PC-9 (cell line): ENCODE measurements at regions of chr2 and their contacts with region 1.

Region 1: DNA sequence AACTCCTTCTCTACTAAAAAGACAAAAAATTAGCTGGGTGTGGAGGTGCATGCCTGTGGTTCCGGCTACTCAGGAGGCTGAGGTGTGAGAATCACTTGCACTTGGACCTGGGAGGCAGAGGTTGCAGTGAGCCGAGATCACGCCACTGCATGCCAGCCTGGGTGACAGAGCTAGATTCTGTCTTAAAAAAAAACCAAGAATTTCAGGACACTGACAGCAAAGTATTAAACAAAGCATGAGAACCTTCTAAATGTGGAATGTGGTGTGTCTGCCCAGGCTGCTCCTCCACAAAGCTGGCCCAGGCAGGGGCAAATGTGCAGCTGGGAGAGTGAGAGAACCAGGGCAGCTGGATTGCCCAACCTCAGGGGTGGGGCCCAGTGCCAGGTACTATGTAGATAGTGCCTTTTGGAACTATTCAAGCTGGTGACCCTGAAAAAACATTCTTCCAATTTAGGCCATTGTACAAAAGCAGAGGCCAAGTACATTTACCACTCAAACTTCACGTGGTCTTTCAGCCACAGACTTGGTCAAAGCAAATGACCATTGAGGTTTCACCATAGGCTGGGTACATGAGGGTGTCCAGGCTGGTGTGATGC is 6.7 kb upstream of the UGT1A5 start:
- DNase-seq: peak; percentile 97
- H3K4me3 ChIP-seq: peak overlapping the region; percentile 15; the same call in 1 of the 2 replicates
- H3K27ac ChIP-seq: peak overlapping the region; percentile 95
- H3K4me1 ChIP-seq: peaks cover 97% of the 10 kb centered on the region
- H3K27me3 ChIP-seq: no peaks in the 10 kb centered on the region
- CTCF ChIP-seq: no peak

Region 2: GRCh38 chr2:233413559-233414272 is 292.3 kb before region 1 on chr2:
- CTCF ChIA-PET with region 1: no interaction called
- POLR2A ChIA-PET with region 1: interaction called, 4 read pairs
- intact Hi-C with region 1: loop called (anchors 2 kb)
- DNase-seq: peak; percentile 93
- H3K4me3 ChIP-seq: peak overlapping the region; percentile 18; the same call in 1 of the 2 replicates
- H3K27ac ChIP-seq: peak overlapping the region; percentile 88
- H3K4me1 ChIP-seq: peaks cover 38% of the 10 kb centered on the region
- H3K27me3 ChIP-seq: no peaks in the 10 kb centered on the region
- CTCF ChIP-seq: no peak

Region 3: GRCh38 chr2:233474308-233475160 is 231.5 kb before region 1 on chr2:
- CTCF ChIA-PET with region 1: no interaction called
- POLR2A ChIA-PET with region 1: interaction called, 26 read pairs
- intact Hi-C with region 1: no loop called
- DNase-seq: no peak
- H3K4me3 ChIP-seq: no peak overlapping the region
- H3K27ac ChIP-seq: no peak overlapping the region
- H3K4me1 ChIP-seq: no peaks in the 10 kb centered on the region
- H3K27me3 ChIP-seq: no peaks in the 10 kb centered on the region
- CTCF ChIP-seq: no peak

Region 4: GRCh38 chr2:233528182-233528581 is 177.8 kb before region 1 on chr2:
- CTCF ChIA-PET with region 1: no interaction called
- POLR2A ChIA-PET with region 1: no interaction called
- intact Hi-C with region 1: no loop called
- DNase-seq: no peak
- H3K4me3 ChIP-seq: no peak overlapping the region
- H3K27ac ChIP-seq: no peak overlapping the region
- H3K4me1 ChIP-seq: peaks cover 4% of the 10 kb centered on the region; the same call in 1 of the 2 replicates
- H3K27me3 ChIP-seq: no peaks in the 10 kb centered on the region
- CTCF ChIP-seq: no peak

Region 5: GRCh38 chr2:233556756-233557736 is 149.0 kb before region 1 on chr2:
- CTCF ChIA-PET with region 1: no interaction called
- POLR2A ChIA-PET with region 1: interaction called, 8 read pairs
- intact Hi-C with region 1: loop called (anchors 2 kb)
- DNase-seq: peak; percentile 55 to 89
- H3K4me3 ChIP-seq: peak overlapping the region; percentile 25; the same call in 1 of the 2 replicates
- H3K27ac ChIP-seq: peak overlapping the region; percentile 98
- H3K4me1 ChIP-seq: peaks cover 41% of the 10 kb centered on the region
- H3K27me3 ChIP-seq: no peaks in the 10 kb centered on the region
- CTCF ChIP-seq: no peak

Region 6: DNA sequence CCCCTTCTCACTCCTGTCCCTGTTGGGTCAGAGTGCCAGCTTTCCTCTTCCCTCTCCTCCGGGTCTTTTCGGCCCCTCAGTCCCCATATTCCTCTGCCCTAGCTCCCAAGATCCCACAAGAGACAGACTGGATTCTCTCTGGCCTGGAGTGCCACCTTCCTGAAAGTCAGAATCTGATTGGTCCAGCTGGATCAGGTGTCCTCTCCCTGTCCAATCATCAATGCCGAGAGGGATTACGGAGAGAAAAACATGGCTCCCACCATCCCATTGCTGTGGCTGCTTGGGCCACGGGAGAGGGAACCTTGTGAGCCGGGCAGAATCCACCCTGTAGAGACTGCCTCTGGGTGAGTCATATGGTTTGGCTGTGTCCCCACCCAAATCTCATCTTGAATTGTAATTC is 69.4 kb after region 1 on chr2:
- CTCF ChIA-PET with region 1: no interaction called
- POLR2A ChIA-PET with region 1: interaction called, 13 read pairs
- intact Hi-C with region 1: no loop called
- DNase-seq: peak in 1 of 2 experiments; percentile 43
- H3K4me3 ChIP-seq: no peak overlapping the region
- H3K27ac ChIP-seq: no peak overlapping the region
- H3K4me1 ChIP-seq: no peaks in the 10 kb centered on the region
- H3K27me3 ChIP-seq: no peaks in the 10 kb centered on the region
- CTCF ChIP-seq: no peak